Calu3 (cell line): ENCODE measurements at regions of chr21 and their contacts with region 1.

Region 1: DNA sequence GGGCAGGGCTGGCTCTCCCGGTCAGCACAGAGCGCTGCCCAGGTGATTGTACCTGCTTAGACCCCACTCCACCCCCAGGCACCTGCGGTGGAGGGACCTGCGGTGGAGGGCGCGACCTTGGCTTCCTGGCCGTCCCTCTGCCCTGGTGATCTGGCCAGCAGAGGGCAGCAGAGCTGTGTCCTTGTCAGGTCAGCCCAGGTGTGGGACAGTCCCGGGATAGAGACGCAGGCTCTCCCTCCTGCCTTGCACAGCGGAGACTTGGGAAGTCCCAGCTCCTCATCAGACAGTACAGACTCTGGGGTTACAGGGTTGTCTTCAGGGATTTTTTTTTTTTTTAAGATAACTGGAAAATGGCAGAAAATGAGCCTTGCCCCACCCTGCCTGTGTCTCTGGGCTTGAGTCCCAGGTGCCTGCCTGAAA is 10.0 kb downstream of the SLX9 start:
- DNase-seq: peak; percentile 81
- H3K4me3 Mint-ChIP-seq: no peak overlapping the region
- H3K27ac Mint-ChIP-seq: no peak overlapping the region
- H3K4me1 Mint-ChIP-seq: no peaks in the 10 kb centered on the region
- H3K27me3 Mint-ChIP-seq: no peaks in the 10 kb centered on the region
- CTCF ChIP-seq: peak; percentile 77

Region 2: GRCh38 chr21:44939532-44940115 is 10.2 kb before region 1 on chr21 and contains the start of gene SLX9:
- CTCF ChIA-PET with region 1: no interaction called
- intact Hi-C with region 1: no loop called
- DNase-seq: peak; percentile 80
- H3K4me3 Mint-ChIP-seq: peak within 1 kb of the TSS; percentile 74
- H3K27ac Mint-ChIP-seq: peak within 1 kb of the TSS; percentile 19
- H3K4me1 Mint-ChIP-seq: peaks cover 21% of the 10 kb centered on the region
- H3K27me3 Mint-ChIP-seq: no peaks in the 10 kb centered on the region
- CTCF ChIP-seq: no peak
- total RNA-seq, gene SLX9: 24.6 and 28.6 TPM in 2 replicates

Region 3: DNA sequence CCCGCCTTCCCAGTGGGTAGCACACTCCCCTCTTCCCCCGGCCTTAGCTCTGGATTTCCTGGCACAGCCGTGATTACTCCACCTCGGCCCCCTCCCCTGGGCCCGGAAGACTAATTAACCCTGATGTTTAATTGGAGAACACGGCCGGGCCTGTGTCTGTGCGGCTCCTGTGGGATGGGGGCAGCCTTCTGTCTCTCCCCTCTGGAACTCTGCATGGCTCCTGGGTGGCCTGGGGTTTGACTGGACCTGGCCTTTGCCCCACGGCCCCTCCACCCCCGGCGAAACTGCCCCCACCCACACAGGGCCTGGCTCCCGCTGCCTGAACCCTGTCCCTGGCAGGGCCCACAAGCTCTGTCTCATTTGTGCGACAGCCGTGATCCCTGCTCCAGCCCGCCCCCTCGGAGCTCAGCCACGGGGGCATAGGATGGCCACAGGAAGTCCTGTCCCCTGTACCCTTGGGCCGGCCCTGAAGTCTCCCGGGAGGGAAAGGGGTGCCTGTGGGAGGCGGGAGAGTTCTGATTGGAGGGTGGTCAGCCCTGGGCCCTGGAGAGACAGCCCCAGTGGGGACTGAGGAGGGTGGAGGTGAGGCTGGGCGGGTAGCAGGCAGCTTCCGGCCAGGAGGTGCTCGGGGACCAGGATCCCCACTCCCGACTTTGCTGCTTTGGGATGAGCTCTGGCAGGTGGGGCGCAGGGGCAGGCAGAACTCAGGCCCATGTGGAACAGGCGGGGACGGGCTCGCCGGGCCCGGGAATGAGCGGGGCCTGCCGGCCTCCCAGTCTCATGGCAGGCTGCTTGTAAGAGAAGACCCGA is 35.0 kb after region 1 on chr21:
- CTCF ChIA-PET with region 1: no interaction called
- intact Hi-C with region 1: no loop called
- DNase-seq: no peak
- H3K4me3 Mint-ChIP-seq: no peak overlapping the region
- H3K27ac Mint-ChIP-seq: no peak overlapping the region
- H3K4me1 Mint-ChIP-seq: no peaks in the 10 kb centered on the region
- H3K27me3 Mint-ChIP-seq: no peaks in the 10 kb centered on the region
- CTCF ChIP-seq: no peak

Region 4: GRCh38 chr21:45129189-45129923 is 179.6 kb after region 1 on chr21:
- CTCF ChIA-PET with region 1: interaction called, 33 read pairs
- intact Hi-C with region 1: loop called (anchors 2 kb)
- DNase-seq: peak; percentile 11
- H3K4me3 Mint-ChIP-seq: peak overlapping the region; percentile 22
- H3K27ac Mint-ChIP-seq: no peak overlapping the region
- H3K4me1 Mint-ChIP-seq: peaks cover 11% of the 10 kb centered on the region
- H3K27me3 Mint-ChIP-seq: peaks cover 29% of the 10 kb centered on the region
- CTCF ChIP-seq: no peak